ENCODE measurements at regions of chr11 and their contacts with region 1.

Region 1: GRCh38 chr11:83836883-83837654 is 550.9 kb upstream of the CCDC90B start:
- DNase-seq: peak; percentile 73
- H3K4me3 ChIP-seq: no peak overlapping the region
- H3K27ac ChIP-seq: no peak overlapping the region
- H3K4me1 ChIP-seq: peaks cover 0 to 17% (median 13%) of the 10 kb centered on the region in 4 donors
- H3K27me3 ChIP-seq: no peaks in the 10 kb centered on the region
- CTCF ChIP-seq: peak; percentile 28 to 67 (median 46)
- EP300 ChIP-seq: no peak
- POLR2A ChIP-seq: no peak

Region 2: DNA sequence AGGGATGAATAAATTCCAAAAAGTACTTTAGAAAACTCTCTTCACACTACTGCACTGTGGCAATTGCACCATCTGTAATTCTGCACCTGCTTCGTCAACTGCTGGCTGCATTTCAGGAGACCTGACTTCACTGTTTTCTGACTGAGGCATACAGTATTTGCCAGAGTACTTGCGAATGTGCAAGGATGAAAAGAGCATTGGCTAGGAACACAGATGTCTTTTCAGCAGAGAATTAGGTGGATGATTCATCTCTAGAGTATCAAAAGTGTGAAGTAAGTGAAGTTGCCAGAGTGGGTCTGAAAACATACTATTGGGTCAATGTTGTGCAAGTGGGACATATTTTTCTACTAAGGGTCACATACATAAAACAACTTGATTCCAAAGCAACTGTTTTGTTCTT is 123.4 kb before region 1 on chr11:
- intact Hi-C with region 1: no loop called
- DNase-seq: no peak
- H3K4me3 ChIP-seq: no peak overlapping the region
- H3K27ac ChIP-seq: no peak overlapping the region
- H3K4me1 ChIP-seq: peaks cover 0 to 12% (median 0%) of the 10 kb centered on the region in 4 donors
- H3K27me3 ChIP-seq: no peaks in the 10 kb centered on the region
- CTCF ChIP-seq: no peak
- EP300 ChIP-seq: no peak
- POLR2A ChIP-seq: no peak

Region 3: GRCh38 chr11:84261707-84262106 is 424.6 kb after region 1 on chr11:
- intact Hi-C with region 1: loop called (anchors 10 kb)
- DNase-seq: no peak
- H3K4me3 ChIP-seq: no peak overlapping the region
- H3K27ac ChIP-seq: no peak overlapping the region
- H3K4me1 ChIP-seq: no peaks in the 10 kb centered on the region
- H3K27me3 ChIP-seq: no peaks in the 10 kb centered on the region
- CTCF ChIP-seq: no peak
- EP300 ChIP-seq: no peak
- POLR2A ChIP-seq: no peak

Region 4: GRCh38 chr11:84384731-84385130 is 547.7 kb after region 1 on chr11:
- intact Hi-C with region 1: loop called (anchors 5 kb)
- DNase-seq: no peak
- H3K4me3 ChIP-seq: no peak overlapping the region
- H3K27ac ChIP-seq: no peak overlapping the region
- H3K4me1 ChIP-seq: no peaks in the 10 kb centered on the region
- H3K27me3 ChIP-seq: no peaks in the 10 kb centered on the region
- CTCF ChIP-seq: peak in 3 of 4 experiments; percentile 30 to 70 (median 36)
- EP300 ChIP-seq: no peak
- POLR2A ChIP-seq: no peak